Breast epithelium (tissue), 4 donors: ENCODE measurements at regions of chr19 and their contacts with region 1.

Region 1: GRCh38 chr19:44968118-44968517 is 12.9 kb downstream of the CLPTM1 start:
- DNase-seq: no peak
- H3K4me3 ChIP-seq: no peak overlapping the region
- H3K27ac ChIP-seq: no peak overlapping the region
- H3K4me1 ChIP-seq: no peaks in the 10 kb centered on the region
- H3K27me3 ChIP-seq: no peaks in the 10 kb centered on the region
- CTCF ChIP-seq: no peak
- POLR2A ChIP-seq: no peak

Region 2: DNA sequence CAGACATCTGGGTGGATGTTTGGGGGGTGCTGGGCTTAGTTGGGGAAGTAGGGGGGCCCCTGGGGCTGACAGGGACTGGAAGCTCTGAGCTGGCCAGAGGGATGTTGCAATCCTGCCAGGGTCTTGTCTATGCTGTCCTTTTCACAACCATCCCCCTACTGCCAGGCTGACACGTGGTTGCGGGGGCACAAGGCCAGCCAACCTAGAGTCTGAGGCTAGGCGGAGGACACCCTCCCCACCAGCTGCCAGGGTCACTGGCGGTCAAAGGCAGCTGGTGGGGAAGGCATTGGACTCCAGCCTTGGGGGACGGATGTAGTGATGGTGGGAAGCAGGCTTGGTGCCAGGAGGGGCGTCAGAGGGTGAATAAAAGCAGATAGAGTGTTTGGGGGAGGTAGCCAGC is 55.3 kb before region 1 on chr19:
- intact Hi-C with region 1: no loop called
- DNase-seq: peak in 1 of 2 donors; percentile 36
- H3K4me3 ChIP-seq: no peak overlapping the region
- H3K27ac ChIP-seq: peak overlapping the region in 1 of 2 donors; percentile 85
- H3K4me1 ChIP-seq: peaks cover 0 to 7% of the 10 kb centered on the region in 2 donors
- H3K27me3 ChIP-seq: no peaks in the 10 kb centered on the region
- CTCF ChIP-seq: no peak
- POLR2A ChIP-seq: no peak

Region 3: GRCh38 chr19:44984005-44984404 is 15.9 kb after region 1 on chr19:
- intact Hi-C with region 1: loop called (anchors 2 kb)
- DNase-seq: no peak
- H3K4me3 ChIP-seq: no peak overlapping the region
- H3K27ac ChIP-seq: no peak overlapping the region
- H3K4me1 ChIP-seq: no peaks in the 10 kb centered on the region
- H3K27me3 ChIP-seq: no peaks in the 10 kb centered on the region
- CTCF ChIP-seq: no peak
- POLR2A ChIP-seq: no peak

Region 4: DNA sequence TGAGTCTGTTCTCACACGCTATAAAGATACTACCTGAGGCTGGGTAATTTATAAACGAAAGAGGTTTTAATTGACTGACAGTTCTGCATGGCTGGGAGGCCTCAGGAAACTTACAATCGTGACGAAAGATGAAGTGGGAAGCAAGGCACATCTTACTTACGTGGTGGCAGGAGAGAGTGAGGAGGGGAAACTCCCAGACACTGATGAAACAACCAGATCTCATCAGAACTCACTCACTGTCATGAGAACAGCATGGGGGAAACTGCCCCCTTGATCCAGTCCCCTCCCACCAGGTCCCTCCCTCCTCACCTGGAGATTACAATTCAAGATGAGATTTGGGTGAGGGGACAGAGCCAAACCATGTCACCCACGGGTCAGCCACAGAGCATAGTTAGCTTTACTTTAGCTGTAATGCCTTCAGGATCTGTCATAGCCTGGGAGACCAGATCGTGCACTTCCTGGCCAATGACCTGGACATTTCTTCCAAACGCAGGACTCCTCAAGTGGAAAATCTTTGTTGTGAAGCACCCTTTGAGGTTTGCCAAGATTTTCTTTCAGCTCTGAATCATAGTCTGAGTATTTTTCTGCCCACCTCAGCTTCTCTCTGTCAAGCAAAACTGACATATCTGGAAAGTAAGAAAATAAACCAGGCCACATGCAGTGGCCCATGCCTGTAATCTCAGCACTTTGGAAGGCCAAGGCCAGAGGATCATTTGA is 1303.5 kb after region 1 on chr19:
- intact Hi-C with region 1: no loop called
- DNase-seq: no peak
- H3K4me3 ChIP-seq: no peak overlapping the region
- H3K27ac ChIP-seq: no peak overlapping the region
- H3K4me1 ChIP-seq: no peaks in the 10 kb centered on the region
- H3K27me3 ChIP-seq: peaks cover 0 to 2% of the 10 kb centered on the region in 2 donors
- CTCF ChIP-seq: no peak
- POLR2A ChIP-seq: no peak